ENCODE measurements at regions of chr13 and their contacts with region 1.

Region 1: GRCh38 chr13:21616880-21617279 is 12.9 kb upstream of the MICU2 start:
- DNase-seq: no peak
- ATAC-seq: no peak
- H3K4me3 ChIP-seq: no peak overlapping the region
- H3K27ac ChIP-seq: no peak overlapping the region
- H3K4me1 ChIP-seq: 0 out of 2 replicates have a peak, but pooled peaks cover 4% of the 10 kb centered on the region
- H3K27me3 ChIP-seq: peaks cover 0 to 2% of the 10 kb centered on the region in 2 experiments; a peak in 1 of 4 replicates
- CTCF ChIP-seq: no peak
- EP300 ChIP-seq: no peak
- POLR2A ChIP-seq: no peak
- RAD21 ChIP-seq: no peak

Region 2: DNA sequence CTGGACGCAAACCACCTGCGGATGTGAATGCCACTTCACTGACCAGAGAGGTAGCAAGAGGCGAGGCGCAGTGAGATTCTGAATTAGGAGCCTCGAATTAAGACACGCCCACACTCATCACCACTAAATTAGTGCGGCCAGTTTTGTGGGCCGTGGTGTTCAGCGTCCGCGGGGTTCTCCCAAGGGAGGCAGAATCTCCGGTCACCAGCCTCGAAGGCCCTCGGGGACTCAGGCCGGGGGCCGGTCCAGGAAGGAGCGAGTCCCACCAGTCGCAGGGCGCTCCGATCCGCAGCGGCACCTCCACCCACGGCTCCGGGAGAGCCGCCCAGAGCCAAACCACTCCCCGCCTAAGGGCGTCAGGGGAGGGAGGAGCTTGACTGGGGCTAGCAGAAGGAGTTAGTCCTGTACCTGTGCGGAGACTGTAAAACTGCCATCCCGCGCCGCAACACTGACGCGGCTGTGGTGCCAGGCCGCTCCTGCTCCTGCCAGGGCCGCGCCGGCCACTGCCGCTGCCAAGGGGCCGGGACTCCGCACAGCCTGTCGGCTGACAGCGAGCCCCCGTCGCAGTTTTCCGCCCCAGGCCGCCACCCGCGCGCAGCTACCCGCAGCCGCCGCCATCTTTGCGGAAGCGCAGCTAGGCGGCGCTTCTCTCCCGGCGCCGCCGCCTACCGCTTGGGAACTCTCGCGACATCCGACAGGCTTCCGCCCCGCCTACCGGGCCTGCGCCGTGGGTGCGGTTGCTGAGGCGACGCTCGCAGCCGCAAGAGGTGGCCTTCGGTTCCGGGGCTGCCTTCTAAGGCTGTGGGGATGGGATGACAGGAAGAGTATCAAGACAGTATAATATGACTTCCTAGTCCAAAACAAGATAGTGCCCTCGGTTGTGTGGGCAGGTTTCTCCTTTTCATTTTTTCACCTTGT is 13.1 kb before region 1 on chr13 and contains the start of gene MICU2:
- CTCF ChIA-PET with region 1: interaction called, 23 read pairs
- POLR2A ChIA-PET with region 1: interaction called, 10 read pairs
- RAD21 ChIA-PET with region 1: interaction called, 3 read pairs
- SMC1A ChIA-PET with region 1: interaction called, 18 read pairs
- in situ Hi-C with region 1: no loop called
- intact Hi-C with region 1: no loop called
- DNase-seq: peak; percentile 81
- ATAC-seq: peak; percentile 98
- H3K4me3 ChIP-seq: peak within 1 kb of the TSS; percentile 68
- H3K27ac ChIP-seq: peak within 1 kb of the TSS; percentile 82
- H3K4me1 ChIP-seq: no peaks in the 10 kb centered on the region
- H3K27me3 ChIP-seq: no peaks in the 10 kb centered on the region; a peak in 1 of 4 replicates
- CTCF ChIP-seq: no peak
- EP300 ChIP-seq: peak; percentile 26 to 33; a peak in 1 of 4 replicates
- POLR2A ChIP-seq: peak; percentile 100
- RAD21 ChIP-seq: no peak
- polyA plus RNA-seq, gene MICU2: 17.7 to 27.8 TPM

Region 3: GRCh38 chr13:23348262-23349127 is 1731.6 kb after region 1 on chr13:
- CTCF ChIA-PET with region 1: no interaction called
- POLR2A ChIA-PET with region 1: no interaction called
- RAD21 ChIA-PET with region 1: no interaction called
- SMC1A ChIA-PET with region 1: no interaction called
- in situ Hi-C with region 1: no loop called
- intact Hi-C with region 1: no loop called
- DNase-seq: no peak
- ATAC-seq: no peak
- H3K4me3 ChIP-seq: no peak overlapping the region
- H3K27ac ChIP-seq: no peak overlapping the region
- H3K4me1 ChIP-seq: 0 out of 2 replicates have a peak, but pooled peaks cover 4% of the 10 kb centered on the region
- H3K27me3 ChIP-seq: no peaks in the 10 kb centered on the region
- CTCF ChIP-seq: no peak
- EP300 ChIP-seq: no peak
- POLR2A ChIP-seq: no peak
- RAD21 ChIP-seq: no peak

Measured in GM12878 (cell line).